GM18951 (cell line): ENCODE measurements at regions of chr16 and their contacts with region 1.

Region 1: DNA sequence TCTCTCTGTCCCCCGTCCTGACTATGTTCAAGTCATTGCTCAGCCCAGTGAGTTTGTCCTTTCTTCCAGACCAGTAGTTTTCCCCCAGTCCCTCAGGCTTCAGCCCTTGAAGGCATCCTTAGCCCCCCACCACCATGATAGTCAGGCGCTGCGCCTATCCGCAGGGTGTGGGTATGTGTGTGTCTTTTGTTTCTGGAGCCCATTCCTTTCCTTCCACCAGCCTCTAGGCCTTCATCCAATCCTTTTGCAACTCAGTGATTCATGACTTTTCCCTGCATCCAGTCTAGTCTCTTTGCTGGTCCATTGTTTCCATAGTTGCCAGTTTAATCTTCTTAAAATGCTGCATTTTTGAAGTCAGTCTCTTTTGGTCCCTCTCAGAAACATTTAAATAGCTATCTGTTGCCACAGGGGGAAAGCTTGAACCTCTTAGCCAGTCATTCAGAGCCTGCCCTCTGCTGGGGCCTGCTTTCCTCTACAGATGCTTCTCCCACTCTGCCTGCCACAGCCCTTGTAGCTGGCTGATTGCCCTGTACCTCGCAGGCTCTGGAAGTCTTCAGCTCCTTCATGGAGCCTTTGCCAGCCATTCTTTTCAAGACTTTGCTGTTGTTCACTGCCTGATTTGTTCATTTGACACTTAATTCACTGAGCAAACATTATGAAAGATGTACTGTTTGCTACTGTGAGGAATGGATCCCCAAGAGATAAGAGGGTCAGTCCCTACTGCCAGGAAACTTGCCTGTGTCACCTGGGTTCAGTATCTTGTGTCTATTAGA is 55.9 kb upstream of the ADCY7 start:
- POLR2A ChIP-seq: no peak

Region 2: GRCh38 chr16:50354629-50355456 is 144.4 kb after region 1 on chr16:
- in situ Hi-C with region 1: loop called (anchors 5 kb)
- POLR2A ChIP-seq: no peak